IMR-90 (cell line): ENCODE measurements at regions of chr2 and their contacts with region 1.

Region 1: GRCh38 chr2:216698895-216699294 is 3.5 kb upstream of the IGFBP5 start:
- DNase-seq: peak; percentile 84
- ATAC-seq: peak; percentile 43
- H3K4me3 ChIP-seq: no peak overlapping the region
- H3K27ac ChIP-seq: peak overlapping the region; percentile 68
- H3K4me1 ChIP-seq: peaks cover 28% of the 10 kb centered on the region
- H3K27me3 ChIP-seq: no peaks in the 10 kb centered on the region
- CTCF ChIP-seq: peak; percentile 81
- POLR2A ChIP-seq: no peak
- RAD21 ChIP-seq: peak; percentile 90

Region 2: GRCh38 chr2:216989340-216990129 is 290.6 kb after region 1 on chr2:
- CTCF ChIA-PET with region 1: interaction called, 3 read pairs
- POLR2A ChIA-PET with region 1: no interaction called
- dilution Hi-C with region 1: no loop called
- in situ Hi-C with region 1: no loop called
- intact Hi-C with region 1: loop called (anchors 5 kb)
- DNase-seq: peak; percentile 50
- ATAC-seq: peak; percentile 57; the same call in 1 of the 2 replicates
- H3K4me3 ChIP-seq: no peak overlapping the region
- H3K27ac ChIP-seq: no peak overlapping the region
- H3K4me1 ChIP-seq: peaks cover 9% of the 10 kb centered on the region
- H3K27me3 ChIP-seq: no peaks in the 10 kb centered on the region; the same call in 1 of the 2 replicates
- CTCF ChIP-seq: no peak; the same call in none of the 2 replicates
- POLR2A ChIP-seq: no peak
- RAD21 ChIP-seq: 0 out of 2 replicates have a peak, but pooled peaks have one; percentile 17

Region 3: GRCh38 chr2:217105733-217106649 is 407.1 kb after region 1 on chr2:
- CTCF ChIA-PET with region 1: interaction called, 6 read pairs
- POLR2A ChIA-PET with region 1: interaction called, 13 read pairs
- dilution Hi-C with region 1: no loop called
- in situ Hi-C with region 1: no loop called
- intact Hi-C with region 1: loop called (anchors 1 kb)
- DNase-seq: peak; percentile 95
- ATAC-seq: peak; percentile 86
- H3K4me3 ChIP-seq: no peak overlapping the region
- H3K27ac ChIP-seq: peak overlapping the region; percentile 99
- H3K4me1 ChIP-seq: peaks cover 23% of the 10 kb centered on the region
- H3K27me3 ChIP-seq: no peaks in the 10 kb centered on the region
- CTCF ChIP-seq: no peak
- POLR2A ChIP-seq: peak; percentile 68; the same call in 1 of the 2 replicates
- RAD21 ChIP-seq: peak; percentile 11; the same call in 1 of the 2 replicates

Region 4: DNA sequence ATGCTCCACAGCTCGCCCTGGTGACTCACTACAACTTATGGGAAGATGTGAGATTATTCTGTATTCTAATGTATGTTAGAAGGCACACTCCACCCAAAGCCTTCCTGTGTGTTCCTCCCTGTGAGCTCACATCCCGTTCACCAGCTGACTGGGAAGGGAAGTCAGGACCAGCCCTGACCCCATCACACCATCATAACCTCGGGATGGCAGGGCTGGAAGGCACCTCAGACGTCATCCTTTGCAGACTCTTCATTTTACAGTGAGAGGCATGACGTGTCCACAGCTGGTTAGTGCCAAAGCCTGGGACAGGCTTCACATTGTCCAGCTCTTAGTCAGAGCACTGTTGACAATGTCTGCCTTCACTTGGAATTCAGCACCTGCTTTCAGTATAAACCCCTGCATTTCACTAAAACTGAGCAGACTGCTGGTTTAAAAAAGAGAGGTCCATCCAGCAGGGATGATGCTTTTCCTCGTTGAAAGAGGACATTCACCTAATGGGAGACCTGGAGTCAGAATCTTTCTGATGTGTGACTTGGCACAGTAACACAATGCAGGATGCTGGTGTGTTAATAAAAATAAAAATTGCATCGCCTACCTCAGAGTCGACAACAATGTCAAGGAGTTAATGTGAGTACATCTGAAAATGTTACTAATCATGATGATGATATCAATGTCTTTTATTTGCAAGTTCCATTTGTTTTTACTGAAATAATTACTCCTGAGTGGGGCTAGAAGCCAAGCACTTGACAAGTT is 578.9 kb after region 1 on chr2:
- CTCF ChIA-PET with region 1: no interaction called
- POLR2A ChIA-PET with region 1: interaction called, 15 read pairs
- dilution Hi-C with region 1: no loop called
- in situ Hi-C with region 1: loop called (anchors 10 kb)
- intact Hi-C with region 1: loop called (anchors 2 kb)
- DNase-seq: peak; percentile 100
- ATAC-seq: peak; percentile 77
- H3K4me3 ChIP-seq: peak overlapping the region; percentile 22; the same call in 1 of the 2 replicates
- H3K27ac ChIP-seq: peak overlapping the region; percentile 91
- H3K4me1 ChIP-seq: peaks cover 13% of the 10 kb centered on the region
- H3K27me3 ChIP-seq: no peaks in the 10 kb centered on the region
- CTCF ChIP-seq: no peak
- POLR2A ChIP-seq: peak; percentile 50; the same call in 1 of the 2 replicates
- RAD21 ChIP-seq: peak; percentile 20; the same call in 1 of the 2 replicates

Region 5: DNA sequence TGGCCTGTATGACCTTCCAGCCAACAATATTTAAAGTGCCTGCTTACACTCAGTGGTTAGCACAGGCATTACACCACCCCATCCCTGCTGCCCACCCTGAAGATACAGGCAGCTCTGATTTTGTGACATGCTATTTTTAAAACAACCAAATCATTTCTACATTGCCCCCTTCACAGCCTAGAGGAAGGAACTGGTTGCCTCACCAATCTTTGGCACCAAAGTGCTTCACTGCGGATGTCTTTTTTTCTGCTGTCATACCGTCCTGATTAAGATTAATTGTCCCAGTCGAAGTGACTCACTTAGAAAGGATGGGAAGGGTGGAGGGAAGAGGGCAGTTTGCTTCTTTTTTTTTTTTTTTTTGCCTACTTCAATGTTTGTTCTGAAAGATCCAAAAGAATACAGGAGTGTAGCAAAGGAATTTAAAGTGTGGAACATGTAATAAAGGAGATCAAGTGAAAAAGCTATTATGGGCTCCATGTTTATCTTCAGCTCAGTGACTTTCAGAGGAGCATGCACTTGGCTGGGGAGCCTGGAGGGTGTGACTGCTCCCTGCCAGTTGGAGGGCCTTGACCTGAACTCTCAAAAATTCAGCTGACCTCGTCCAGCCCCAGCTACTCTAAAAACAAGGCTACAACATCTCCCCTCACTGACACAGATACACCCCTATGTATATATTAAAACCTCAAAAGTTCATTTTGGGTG is 662.0 kb after region 1 on chr2:
- CTCF ChIA-PET with region 1: no interaction called
- POLR2A ChIA-PET with region 1: interaction called, 13 read pairs
- dilution Hi-C with region 1: no loop called
- in situ Hi-C with region 1: no loop called
- intact Hi-C with region 1: loop called (anchors 10 kb)
- DNase-seq: peak; percentile 89
- ATAC-seq: peak; percentile 71
- H3K4me3 ChIP-seq: no peak overlapping the region
- H3K27ac ChIP-seq: peak overlapping the region; percentile 96
- H3K4me1 ChIP-seq: peaks cover 37% of the 10 kb centered on the region
- H3K27me3 ChIP-seq: no peaks in the 10 kb centered on the region
- CTCF ChIP-seq: peak; percentile 5; the same call in 1 of the 2 replicates
- POLR2A ChIP-seq: no peak
- RAD21 ChIP-seq: no peak

Region 6: DNA sequence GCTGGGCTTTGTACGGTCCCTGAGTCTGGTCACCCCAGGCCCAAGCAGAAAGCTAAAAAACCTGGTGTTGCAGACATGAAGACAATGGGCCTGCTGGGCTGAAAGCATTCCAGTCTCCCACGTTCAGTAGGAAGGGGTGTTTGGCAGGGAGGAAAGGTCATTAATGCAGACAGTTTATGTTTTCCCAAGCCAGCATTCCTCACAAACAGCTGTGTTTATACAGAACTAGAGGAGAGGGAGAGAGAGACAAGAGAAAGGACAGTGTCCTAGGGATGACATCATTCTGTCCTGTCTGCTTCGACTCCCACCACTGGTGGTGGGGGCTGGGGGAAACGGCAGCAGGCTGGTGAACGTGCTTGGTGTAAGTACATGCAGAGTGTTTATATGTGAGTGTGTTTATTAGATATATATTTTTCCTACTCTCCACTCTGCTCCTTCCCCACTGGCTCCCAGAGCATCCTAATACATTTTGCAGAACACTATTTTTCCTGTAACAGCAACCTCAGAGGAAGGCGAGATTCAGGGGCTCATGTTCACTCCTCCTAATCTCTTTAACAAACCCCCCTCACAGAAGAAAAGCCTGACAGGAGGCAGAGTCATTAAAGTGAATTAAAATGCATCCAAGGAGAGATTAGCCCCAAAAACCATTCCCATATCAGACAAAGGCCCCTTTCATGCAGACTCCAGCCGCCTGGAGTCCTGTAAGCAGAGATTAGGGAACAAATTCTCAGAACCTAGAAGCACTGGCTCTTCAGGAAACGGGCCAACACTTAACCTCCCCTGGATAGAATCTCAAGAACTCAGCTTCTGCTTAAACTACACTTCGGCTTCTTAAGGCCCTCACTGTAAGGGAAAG is 923.5 kb after region 1 on chr2:
- CTCF ChIA-PET with region 1: no interaction called
- POLR2A ChIA-PET with region 1: interaction called, 16 read pairs
- dilution Hi-C with region 1: no loop called
- in situ Hi-C with region 1: no loop called
- intact Hi-C with region 1: loop called (anchors 10 kb)
- DNase-seq: peak; percentile 98
- ATAC-seq: peak; percentile 90
- H3K4me3 ChIP-seq: no peak overlapping the region
- H3K27ac ChIP-seq: peak overlapping the region; percentile 68
- H3K4me1 ChIP-seq: peaks cover 27% of the 10 kb centered on the region
- H3K27me3 ChIP-seq: no peaks in the 10 kb centered on the region
- CTCF ChIP-seq: no peak
- POLR2A ChIP-seq: no peak
- RAD21 ChIP-seq: no peak

Region 7: DNA sequence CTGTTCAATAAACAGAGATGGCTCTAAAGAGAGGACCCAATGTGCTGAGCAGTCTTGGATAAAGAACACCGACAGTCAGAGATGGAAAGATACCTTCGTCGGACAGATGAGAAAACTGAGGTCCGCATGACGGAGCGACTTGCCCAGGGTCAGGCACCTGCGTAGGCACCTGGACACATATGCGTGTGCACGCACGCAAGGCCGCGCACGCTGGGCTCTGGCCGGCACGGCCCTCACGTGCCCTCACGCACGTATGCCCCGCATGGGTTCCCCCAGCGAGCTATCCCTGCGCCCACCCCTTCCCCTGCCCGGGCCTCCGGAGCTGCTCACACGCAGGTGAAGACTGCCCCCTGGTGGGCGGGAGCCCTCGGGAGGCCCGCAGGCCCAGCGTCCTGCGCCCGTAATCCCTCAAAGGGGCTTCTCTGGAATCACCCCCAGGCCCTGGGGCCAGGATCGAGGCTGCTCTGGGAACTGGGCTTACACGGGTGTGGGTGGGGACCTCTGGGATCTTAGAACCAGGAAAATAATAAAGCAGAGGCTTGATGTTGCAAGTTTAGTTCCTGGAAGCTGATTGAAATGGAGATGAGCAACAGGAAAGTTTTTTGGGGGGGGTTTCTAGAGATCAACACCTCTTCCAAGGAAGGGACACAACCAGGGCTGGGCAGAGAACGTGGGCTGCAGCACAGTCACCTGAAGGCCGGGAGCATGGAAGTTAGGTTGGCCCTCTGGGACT is 1057.6 kb after region 1 on chr2:
- CTCF ChIA-PET with region 1: no interaction called
- POLR2A ChIA-PET with region 1: no interaction called
- dilution Hi-C with region 1: no loop called
- in situ Hi-C with region 1: no loop called
- intact Hi-C with region 1: loop called (anchors 5 kb)
- DNase-seq: peak; percentile 64
- ATAC-seq: peak; percentile 94
- H3K4me3 ChIP-seq: no peak overlapping the region
- H3K27ac ChIP-seq: peak overlapping the region; percentile 29; the same call in 1 of the 2 replicates
- H3K4me1 ChIP-seq: peaks cover 10% of the 10 kb centered on the region
- H3K27me3 ChIP-seq: no peaks in the 10 kb centered on the region
- CTCF ChIP-seq: peak; percentile 78
- POLR2A ChIP-seq: no peak
- RAD21 ChIP-seq: peak; percentile 82